SK-N-SH (cell line): ENCODE measurements at regions of chr19 and their contacts with region 1.

Region 1: DNA sequence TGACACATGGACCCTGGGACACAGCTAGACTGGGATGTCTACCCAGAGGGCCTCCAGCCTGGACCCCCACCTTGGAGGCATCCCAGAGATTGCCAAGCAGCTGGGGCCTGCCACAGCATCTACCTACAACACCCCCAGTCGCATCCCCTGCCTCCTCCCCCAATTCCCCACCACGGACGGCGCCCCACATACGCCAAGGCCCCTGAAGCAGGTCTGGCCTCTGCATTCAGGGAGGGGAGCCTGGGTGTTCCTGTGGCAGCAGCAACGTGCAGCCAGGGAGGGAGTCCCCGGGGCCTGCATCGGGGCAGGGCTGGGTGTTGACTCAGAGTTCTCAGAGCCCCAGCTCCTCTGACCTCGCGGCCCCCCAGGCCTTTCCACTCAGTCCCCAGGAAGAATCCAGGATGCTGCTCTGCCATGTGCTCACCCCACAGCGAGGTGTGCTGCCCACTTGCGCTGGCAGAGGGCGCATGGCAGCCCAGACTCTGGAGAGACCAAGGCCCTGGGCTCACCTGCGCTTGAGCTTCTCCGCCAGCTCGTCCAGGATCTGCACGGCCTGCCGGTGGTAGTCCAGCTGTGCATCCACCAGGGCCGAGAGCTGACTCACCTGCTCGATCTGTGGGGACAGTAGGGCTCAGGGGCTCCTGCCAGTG is 19.6 kb downstream of the MPND start:
- DNase-seq: no peak
- H3K4me3 ChIP-seq: no peak overlapping the region
- H3K27ac ChIP-seq: no peak overlapping the region; a peak in 1 of 4 replicates
- H3K4me1 ChIP-seq: peaks cover under 1 to 6% of the 10 kb centered on the region in 2 experiments; a peak in 1 of 4 replicates
- H3K27me3 ChIP-seq: no peaks in the 10 kb centered on the region
- CTCF ChIP-seq: peak; percentile 21; the same call in 1 of the 2 replicates
- EP300 ChIP-seq: no peak
- RAD21 ChIP-seq: peak; percentile 18; the same call in 1 of the 2 replicates

Region 2: DNA sequence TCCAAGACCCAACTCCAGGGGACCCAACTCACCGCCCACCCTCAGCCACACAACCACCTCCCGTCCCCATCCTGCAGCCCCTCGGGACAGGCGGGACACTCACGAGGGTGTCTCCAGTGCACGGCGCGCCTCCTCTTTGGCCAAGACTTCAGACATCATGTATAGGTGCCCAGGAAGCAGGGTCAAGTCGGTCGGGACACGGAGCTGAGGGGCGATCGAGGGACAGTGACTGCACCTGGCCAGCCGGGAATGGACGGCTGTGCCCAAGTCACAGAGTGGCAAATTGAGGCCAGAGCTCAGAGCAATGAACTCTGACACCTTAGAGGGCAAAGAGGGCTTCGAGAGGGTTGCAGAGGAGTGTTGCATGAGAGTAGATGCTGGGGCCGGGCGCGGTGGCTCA is 33.1 kb before region 1 on chr19:
- CTCF ChIA-PET with region 1: no interaction called
- POLR2A ChIA-PET with region 1: no interaction called
- DNase-seq: no peak
- H3K4me3 ChIP-seq: no peak overlapping the region
- H3K27ac ChIP-seq: no peak overlapping the region
- H3K4me1 ChIP-seq: peaks cover 0 to 16% of the 10 kb centered on the region in 2 experiments; a peak in 2 of 4 replicates
- H3K27me3 ChIP-seq: no peaks in the 10 kb centered on the region
- CTCF ChIP-seq: no peak
- EP300 ChIP-seq: no peak
- RAD21 ChIP-seq: no peak

Region 3: DNA sequence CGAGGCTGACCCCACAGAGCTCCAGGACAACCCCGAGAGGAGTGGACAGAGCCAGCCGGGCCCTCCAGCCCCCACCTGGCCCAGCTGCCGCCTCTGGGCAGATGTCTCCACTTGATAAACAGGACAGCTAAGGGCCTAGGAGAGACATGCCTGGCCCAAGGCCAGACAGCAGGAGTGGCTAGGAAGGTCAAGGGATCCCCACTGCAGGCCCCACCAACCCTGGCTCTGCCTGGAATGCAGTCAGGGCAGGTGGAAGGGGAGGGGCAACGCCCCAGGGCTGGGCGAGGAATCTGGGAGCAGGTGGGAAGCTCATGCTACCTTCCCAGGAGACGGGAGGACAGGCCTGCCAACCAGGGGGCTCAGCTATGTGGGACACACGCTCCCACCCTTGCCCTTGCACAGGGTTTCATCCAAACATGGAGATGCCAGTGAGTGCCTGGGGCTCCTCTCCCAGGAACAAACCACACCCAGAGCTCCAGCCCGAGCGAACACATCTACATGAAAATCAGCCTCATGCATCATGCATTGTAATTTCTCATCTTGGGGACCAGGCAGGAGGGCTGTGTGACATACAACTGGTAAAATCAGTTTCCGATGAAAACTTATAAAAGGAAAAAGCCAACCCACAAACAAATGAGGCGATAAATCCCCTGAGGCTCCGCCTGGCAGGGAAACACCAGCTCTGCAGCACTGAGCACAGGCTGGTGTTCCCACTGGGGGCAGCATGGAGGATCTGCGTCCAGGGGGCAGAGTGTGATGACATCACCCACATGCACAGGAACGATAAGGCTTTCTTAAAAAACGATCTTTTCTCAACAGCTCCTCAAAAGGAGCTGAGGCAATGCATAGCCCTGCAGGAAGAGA is 12.4 kb after region 1 on chr19:
- CTCF ChIA-PET with region 1: interaction called, 10 read pairs
- POLR2A ChIA-PET with region 1: no interaction called
- DNase-seq: peak; percentile 73
- H3K4me3 ChIP-seq: no peak overlapping the region
- H3K27ac ChIP-seq: peak overlapping the region; percentile 80 to 92
- H3K4me1 ChIP-seq: peaks cover 33 to 72% of the 10 kb centered on the region in 2 experiments
- H3K27me3 ChIP-seq: no peaks in the 10 kb centered on the region
- CTCF ChIP-seq: peak; percentile 52
- EP300 ChIP-seq: 0 out of 4 replicates have a peak, but pooled peaks of 1 of the 2 experiments have one; percentile 35
- RAD21 ChIP-seq: no peak